ENCODE measurements at regions of chr1 and their contacts with region 1.

Region 1: DNA sequence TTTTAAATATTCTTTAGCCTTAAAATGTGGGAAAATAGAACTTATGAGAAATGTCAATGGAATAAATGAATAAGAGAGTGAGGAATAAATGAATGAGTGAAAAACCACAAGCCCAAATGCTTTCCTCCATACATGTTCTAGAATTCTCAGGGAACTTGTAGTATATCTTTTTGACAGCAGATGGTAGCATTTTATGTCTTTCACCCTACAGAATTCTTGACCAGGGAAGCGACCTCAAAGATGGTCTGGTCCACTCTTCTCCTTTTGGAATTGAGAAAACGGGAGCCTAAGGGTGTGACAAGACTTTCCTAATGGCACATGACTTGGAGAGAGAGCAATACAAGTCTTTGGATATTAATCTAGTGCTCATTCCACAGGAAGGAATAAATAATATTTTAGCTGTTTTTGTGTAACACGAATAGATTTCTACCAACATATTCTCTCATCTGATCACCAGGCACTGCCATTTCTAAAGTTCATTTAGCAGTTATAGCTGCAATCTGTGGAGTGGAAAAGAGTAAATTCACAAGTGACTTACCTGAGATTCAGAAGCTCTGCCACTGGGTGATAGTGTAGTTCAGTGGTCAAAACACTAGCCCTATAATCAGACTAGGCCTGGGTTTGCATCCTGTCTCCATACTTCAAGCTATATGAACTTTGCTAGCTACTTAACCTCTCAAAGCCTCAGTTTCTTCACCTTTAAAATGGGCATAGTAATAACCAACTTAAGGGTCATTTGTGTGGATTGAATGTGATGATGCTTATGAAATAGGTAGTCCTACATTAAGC is 15.0 kb upstream of the F5 start:
- DNase-seq: peak; percentile 55
- H3K4me3 Mint-ChIP-seq: no peak overlapping the region
- H3K27ac Mint-ChIP-seq: no peak overlapping the region
- H3K4me1 Mint-ChIP-seq: no peaks in the 10 kb centered on the region
- H3K27me3 Mint-ChIP-seq: peaks cover 34% of the 10 kb centered on the region
- CTCF ChIP-seq: peak; percentile 42

Region 2: GRCh38 chr1:169586395-169587255 is 14.7 kb before region 1 on chr1 and contains the start of gene F5:
- CTCF ChIA-PET with region 1: interaction called, 32 read pairs
- POLR2A ChIA-PET with region 1: no interaction called
- intact Hi-C with region 1: no loop called
- DNase-seq: peak; percentile 79
- H3K4me3 Mint-ChIP-seq: peak within 1 kb of the TSS; percentile 45
- H3K27ac Mint-ChIP-seq: no peak within 1 kb of the TSS
- H3K4me1 Mint-ChIP-seq: no peaks in the 10 kb centered on the region
- H3K27me3 Mint-ChIP-seq: peaks cover 9% of the 10 kb centered on the region
- CTCF ChIP-seq: peak; percentile 35
- total RNA-seq, gene F5: 0.09 TPM in 1 of 2 replicates, not detected in the other

Region 3: GRCh38 chr1:169634145-169634544 is 32.9 kb after region 1 on chr1:
- CTCF ChIA-PET with region 1: interaction called, 10 read pairs
- POLR2A ChIA-PET with region 1: no interaction called
- intact Hi-C with region 1: no loop called
- DNase-seq: no peak
- H3K4me3 Mint-ChIP-seq: no peak overlapping the region
- H3K27ac Mint-ChIP-seq: no peak overlapping the region
- H3K4me1 Mint-ChIP-seq: no peaks in the 10 kb centered on the region
- H3K27me3 Mint-ChIP-seq: peaks cover 15% of the 10 kb centered on the region
- CTCF ChIP-seq: no peak

Region 4: DNA sequence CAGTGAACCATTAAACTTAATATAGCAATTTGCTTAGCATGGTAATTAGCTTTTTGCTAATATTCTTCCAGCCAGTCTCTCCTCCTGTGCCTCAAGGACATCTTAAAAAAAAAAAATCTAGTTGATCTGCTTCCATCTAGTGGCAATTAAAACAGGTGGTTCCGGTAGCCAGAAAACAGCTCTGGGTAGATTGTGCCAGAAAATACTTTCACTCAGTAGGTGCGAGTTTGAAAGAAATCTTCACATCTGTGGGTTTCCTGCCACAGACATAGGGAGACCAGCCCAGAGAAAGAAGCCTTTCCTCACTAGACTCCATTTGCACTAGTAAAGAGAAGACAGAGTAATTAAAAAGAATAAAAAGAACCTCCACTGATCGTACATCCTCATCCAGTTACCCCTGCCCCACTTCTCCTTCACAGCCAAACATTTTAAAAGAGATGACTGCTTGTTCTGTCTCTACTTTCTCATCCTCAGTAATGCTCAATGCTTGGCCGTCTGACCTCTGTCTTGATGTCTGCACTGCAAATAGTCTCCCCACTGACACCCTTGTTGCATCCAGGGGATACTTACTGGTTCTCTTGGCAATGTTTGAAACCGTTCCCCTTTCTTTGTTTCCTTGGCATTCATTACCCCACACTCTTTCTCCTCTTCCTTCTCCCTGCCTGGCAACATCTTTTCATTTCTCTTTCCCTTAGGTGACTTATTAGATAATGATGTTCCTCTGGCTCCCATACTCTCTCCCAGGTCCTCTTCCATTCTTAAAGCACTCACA is 93.2 kb after region 1 on chr1:
- CTCF ChIA-PET with region 1: interaction called, 16 read pairs
- POLR2A ChIA-PET with region 1: no interaction called
- intact Hi-C with region 1: loop called (anchors 5 kb)
- DNase-seq: no peak
- H3K4me3 Mint-ChIP-seq: no peak overlapping the region
- H3K27ac Mint-ChIP-seq: no peak overlapping the region
- H3K4me1 Mint-ChIP-seq: no peaks in the 10 kb centered on the region
- H3K27me3 Mint-ChIP-seq: peaks cover 18% of the 10 kb centered on the region
- CTCF ChIP-seq: no peak

Region 5: DNA sequence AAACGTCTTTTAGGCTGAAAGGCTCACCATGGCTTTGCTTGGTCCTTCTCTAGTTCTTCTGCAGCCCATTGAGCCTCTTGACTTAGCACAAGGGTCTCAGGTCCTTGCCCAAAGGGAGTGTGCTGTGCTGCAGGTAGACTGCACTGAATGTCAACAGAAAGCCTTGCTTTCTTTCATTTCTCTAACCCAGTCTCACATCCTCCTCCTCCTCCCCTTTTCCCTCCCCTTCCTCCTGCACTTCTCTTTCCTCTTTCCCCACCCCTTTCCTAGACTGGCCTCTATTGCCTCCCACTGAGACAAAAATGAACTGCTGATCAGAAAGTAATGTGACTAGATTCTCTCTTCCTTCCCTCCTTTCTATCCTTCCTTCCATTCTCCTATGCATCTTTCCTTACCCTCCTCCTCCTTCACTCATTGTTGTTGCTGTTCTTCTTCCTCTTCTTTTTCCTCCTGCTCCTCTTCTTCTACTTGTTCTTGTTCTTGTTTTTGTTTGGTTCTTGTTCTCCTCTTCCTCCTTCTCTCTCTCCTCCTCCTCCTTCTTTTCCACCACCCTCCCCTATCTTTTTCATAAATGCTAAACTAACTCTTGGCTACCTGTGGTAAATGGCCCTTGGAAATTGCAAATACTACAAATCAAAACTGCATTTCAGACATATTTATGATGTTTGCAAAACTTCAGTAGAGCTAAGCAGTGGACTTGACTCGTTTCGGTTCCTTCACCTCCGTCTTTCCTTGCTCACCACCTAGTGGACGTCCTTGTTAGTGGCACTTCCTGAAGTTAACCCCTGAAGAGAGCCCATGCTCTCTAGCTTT is 110.4 kb after region 1 on chr1 and contains the start of gene SELL:
- CTCF ChIA-PET with region 1: interaction called, 72 read pairs
- POLR2A ChIA-PET with region 1: no interaction called
- intact Hi-C with region 1: loop called (anchors 1 kb)
- DNase-seq: peak; percentile 90
- H3K4me3 Mint-ChIP-seq: peak within 1 kb of the TSS; percentile 58
- H3K27ac Mint-ChIP-seq: no peak within 1 kb of the TSS
- H3K4me1 Mint-ChIP-seq: peaks cover 7% of the 10 kb centered on the region
- H3K27me3 Mint-ChIP-seq: peaks cover 27% of the 10 kb centered on the region
- CTCF ChIP-seq: peak; percentile 85
- total RNA-seq, gene SELL: not detected in 2 replicates

Region 6: GRCh38 chr1:170881268-170882265 is 1280.3 kb after region 1 on chr1:
- CTCF ChIA-PET with region 1: no interaction called
- POLR2A ChIA-PET with region 1: no interaction called
- intact Hi-C with region 1: loop called (anchors 10 kb)
- DNase-seq: peak; percentile 69
- H3K4me3 Mint-ChIP-seq: no peak overlapping the region
- H3K27ac Mint-ChIP-seq: no peak overlapping the region
- H3K4me1 Mint-ChIP-seq: peaks cover 7% of the 10 kb centered on the region
- H3K27me3 Mint-ChIP-seq: peaks cover 12% of the 10 kb centered on the region
- CTCF ChIP-seq: peak; percentile 63